AG04449 (cell line): ENCODE measurements at regions of chr17 and their contacts with region 1.

Region 1: GRCh38 chr17:74770498-74771318 is 5.4 kb downstream of the NAT9 start:
- DNase-seq: no peak
- H3K4me3 ChIP-seq: no peak overlapping the region
- CTCF ChIP-seq: peak; percentile 91

Region 2: GRCh38 chr17:74659898-74660297 is 110.8 kb before region 1 on chr17:
- CTCF ChIA-PET with region 1: interaction called, 15 read pairs
- POLR2A ChIA-PET with region 1: no interaction called
- DNase-seq: no peak
- H3K4me3 ChIP-seq: no peak overlapping the region
- CTCF ChIP-seq: no peak

Region 3: GRCh38 chr17:74742153-74742515 is 28.6 kb before region 1 on chr17:
- CTCF ChIA-PET with region 1: interaction called, 150 read pairs
- POLR2A ChIA-PET with region 1: interaction called, 6 read pairs
- DNase-seq: no peak
- H3K4me3 ChIP-seq: no peak overlapping the region
- CTCF ChIP-seq: no peak

Region 4: DNA sequence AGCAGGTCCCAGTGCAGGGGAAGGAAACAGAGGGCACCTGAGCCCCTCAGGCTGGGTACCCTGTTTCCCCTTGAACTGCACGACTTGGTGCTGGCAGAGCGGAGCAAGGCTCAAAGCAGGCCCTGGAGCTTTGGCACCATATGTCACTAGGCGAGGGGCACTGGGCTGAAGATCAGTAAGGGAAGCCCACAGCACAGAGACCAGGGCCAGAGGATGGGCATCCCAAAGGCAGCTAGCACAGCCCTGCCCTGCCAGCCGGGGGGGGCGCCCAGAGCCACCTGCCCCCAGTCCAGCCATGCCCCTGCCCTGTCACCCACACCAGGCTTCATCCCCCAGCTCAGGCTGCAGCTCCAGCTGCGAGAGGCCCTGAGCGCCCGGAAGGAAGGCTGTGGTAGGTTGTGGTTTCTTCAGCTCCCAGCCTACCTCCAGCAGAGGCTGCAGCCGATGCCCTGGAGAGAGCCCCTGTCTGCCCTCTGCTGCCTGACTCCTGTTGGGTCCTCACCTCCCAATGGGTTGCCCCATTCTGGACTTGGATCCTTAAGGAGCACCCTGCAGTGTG is 11.4 kb before region 1 on chr17:
- CTCF ChIA-PET with region 1: interaction called, 27 read pairs
- POLR2A ChIA-PET with region 1: interaction called, 3 read pairs
- DNase-seq: no peak
- H3K4me3 ChIP-seq: no peak overlapping the region
- CTCF ChIP-seq: no peak

Region 5: GRCh38 chr17:74801896-74802295 is 31.2 kb after region 1 on chr17:
- CTCF ChIA-PET with region 1: no interaction called
- POLR2A ChIA-PET with region 1: no interaction called
- DNase-seq: no peak
- H3K4me3 ChIP-seq: no peak overlapping the region
- CTCF ChIP-seq: no peak